CD4-positive, alpha-beta T cell (primary cell): ENCODE measurements at regions of chr5 and their contacts with region 1.

Region 1: DNA sequence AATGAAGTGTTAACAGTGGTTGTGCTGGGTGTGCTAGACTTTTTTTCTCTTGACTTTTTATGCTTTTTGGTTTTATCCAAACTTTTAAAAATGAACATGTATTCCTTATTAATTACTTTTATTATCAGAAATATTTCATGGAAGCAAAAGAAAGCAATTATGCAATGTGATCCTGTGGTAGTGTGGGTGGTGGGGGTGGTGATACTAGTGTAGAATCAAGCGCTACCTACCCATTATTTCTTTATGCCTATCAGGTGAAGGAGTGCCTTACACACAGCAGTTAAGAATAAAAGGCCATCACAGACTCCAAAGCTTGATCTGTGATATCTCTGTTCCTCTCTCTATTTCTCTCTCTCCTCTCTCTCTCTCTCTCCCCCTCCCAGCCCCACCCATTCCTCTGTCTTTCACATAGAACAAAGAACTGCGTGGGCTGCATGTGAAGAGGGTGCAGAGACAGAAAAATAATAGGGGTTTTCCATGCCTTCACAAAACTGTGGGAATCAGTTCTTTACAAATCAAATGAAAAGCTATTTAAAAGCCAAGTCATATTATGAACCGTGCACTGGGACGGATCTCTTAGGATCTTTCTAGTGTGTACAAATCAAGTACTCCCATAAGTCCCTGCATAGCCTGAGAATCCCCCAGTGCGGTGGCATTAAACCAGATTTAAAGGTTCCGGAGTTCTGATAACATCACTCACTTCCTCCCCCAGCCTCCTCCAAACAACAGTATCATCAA is 351.2 kb downstream of the RAB3C start:
- DNase-seq: peak in 10 of 14 experiments; percentile 4 to 78 (median 33)
- ATAC-seq: peak; percentile 90
- H3K4me3 ChIP-seq: peak overlapping the region; percentile 27
- H3K4me3 Mint-ChIP-seq: peak overlapping the region; percentile 21
- H3K27ac ChIP-seq: no peak overlapping the region
- H3K27ac Mint-ChIP-seq: peak overlapping the region; percentile 46
- H3K4me1 ChIP-seq: peaks cover 17% of the 10 kb centered on the region
- H3K4me1 Mint-ChIP-seq: peaks cover 38% of the 10 kb centered on the region
- H3K27me3 ChIP-seq: no peaks in the 10 kb centered on the region
- H3K27me3 Mint-ChIP-seq: no peaks in the 10 kb centered on the region
- CTCF ChIP-seq: no peak

Region 2: GRCh38 chr5:57825031-57825683 is 1108.9 kb before region 1 on chr5:
- CTCF ChIA-PET with region 1: no interaction called
- POLR2A ChIA-PET with region 1: no interaction called
- intact Hi-C with region 1: no loop called
- DNase-seq: no peak
- ATAC-seq: no peak
- H3K4me3 ChIP-seq: no peak overlapping the region
- H3K4me3 Mint-ChIP-seq: no peak overlapping the region
- H3K27ac ChIP-seq: no peak overlapping the region
- H3K27ac Mint-ChIP-seq: no peak overlapping the region
- H3K4me1 ChIP-seq: no peaks in the 10 kb centered on the region
- H3K4me1 Mint-ChIP-seq: no peaks in the 10 kb centered on the region
- H3K27me3 ChIP-seq: no peaks in the 10 kb centered on the region
- H3K27me3 Mint-ChIP-seq: no peaks in the 10 kb centered on the region
- CTCF ChIP-seq: no peak

Region 3: GRCh38 chr5:58918021-58918729 is 15.9 kb before region 1 on chr5:
- CTCF ChIA-PET with region 1: no interaction called
- POLR2A ChIA-PET with region 1: no interaction called
- intact Hi-C with region 1: loop called in 1 of 2 experiments (anchors 2 kb)
- DNase-seq: no peak
- ATAC-seq: no peak
- H3K4me3 ChIP-seq: no peak overlapping the region
- H3K4me3 Mint-ChIP-seq: no peak overlapping the region
- H3K27ac ChIP-seq: no peak overlapping the region
- H3K27ac Mint-ChIP-seq: no peak overlapping the region
- H3K4me1 ChIP-seq: no peaks in the 10 kb centered on the region
- H3K4me1 Mint-ChIP-seq: peaks cover 7% of the 10 kb centered on the region
- H3K27me3 ChIP-seq: no peaks in the 10 kb centered on the region
- H3K27me3 Mint-ChIP-seq: no peaks in the 10 kb centered on the region
- CTCF ChIP-seq: no peak

Region 4: DNA sequence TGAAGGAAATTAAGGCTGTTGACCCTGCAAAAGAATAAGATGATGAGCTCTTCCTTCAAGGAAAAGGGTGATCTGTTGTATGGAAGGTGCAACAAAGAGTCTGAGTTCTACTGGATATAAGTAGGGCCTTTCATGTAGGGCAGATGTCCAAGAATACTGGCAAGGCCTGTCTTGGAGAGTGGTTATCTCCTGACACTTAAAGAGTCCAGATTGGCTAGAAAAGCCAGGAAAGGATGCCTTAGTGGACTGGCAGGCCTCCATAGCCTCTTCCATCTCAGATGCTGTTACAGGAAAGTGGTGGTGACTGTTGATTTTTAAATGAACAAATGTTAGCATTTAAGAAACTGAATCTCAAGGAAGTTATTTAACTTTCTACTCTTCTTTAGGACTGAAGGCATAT is 45.0 kb after region 1 on chr5:
- CTCF ChIA-PET with region 1: no interaction called
- POLR2A ChIA-PET with region 1: no interaction called
- intact Hi-C with region 1: loop called in 1 of 2 experiments (anchors 5 kb)
- DNase-seq: no peak
- ATAC-seq: no peak
- H3K4me3 ChIP-seq: no peak overlapping the region
- H3K4me3 Mint-ChIP-seq: no peak overlapping the region
- H3K27ac ChIP-seq: no peak overlapping the region
- H3K27ac Mint-ChIP-seq: peak overlapping the region; percentile 34
- H3K4me1 ChIP-seq: no peaks in the 10 kb centered on the region
- H3K4me1 Mint-ChIP-seq: no peaks in the 10 kb centered on the region
- H3K27me3 ChIP-seq: no peaks in the 10 kb centered on the region
- H3K27me3 Mint-ChIP-seq: no peaks in the 10 kb centered on the region
- CTCF ChIP-seq: no peak